Mammary epithelial cell (primary cell): ENCODE measurements at regions of chr2 and their contacts with region 1.

Region 1: GRCh38 chr2:237092920-237093781 is 7.5 kb downstream of the COPS8 start:
- DNase-seq: peak; percentile 48
- H3K4me3 ChIP-seq: no peak overlapping the region
- H3K27ac ChIP-seq: peak overlapping the region; percentile 24
- H3K4me1 ChIP-seq: peaks cover 50% of the 10 kb centered on the region
- H3K27me3 ChIP-seq: no peaks in the 10 kb centered on the region
- CTCF ChIP-seq: peak; percentile 68 to 73

Region 2: DNA sequence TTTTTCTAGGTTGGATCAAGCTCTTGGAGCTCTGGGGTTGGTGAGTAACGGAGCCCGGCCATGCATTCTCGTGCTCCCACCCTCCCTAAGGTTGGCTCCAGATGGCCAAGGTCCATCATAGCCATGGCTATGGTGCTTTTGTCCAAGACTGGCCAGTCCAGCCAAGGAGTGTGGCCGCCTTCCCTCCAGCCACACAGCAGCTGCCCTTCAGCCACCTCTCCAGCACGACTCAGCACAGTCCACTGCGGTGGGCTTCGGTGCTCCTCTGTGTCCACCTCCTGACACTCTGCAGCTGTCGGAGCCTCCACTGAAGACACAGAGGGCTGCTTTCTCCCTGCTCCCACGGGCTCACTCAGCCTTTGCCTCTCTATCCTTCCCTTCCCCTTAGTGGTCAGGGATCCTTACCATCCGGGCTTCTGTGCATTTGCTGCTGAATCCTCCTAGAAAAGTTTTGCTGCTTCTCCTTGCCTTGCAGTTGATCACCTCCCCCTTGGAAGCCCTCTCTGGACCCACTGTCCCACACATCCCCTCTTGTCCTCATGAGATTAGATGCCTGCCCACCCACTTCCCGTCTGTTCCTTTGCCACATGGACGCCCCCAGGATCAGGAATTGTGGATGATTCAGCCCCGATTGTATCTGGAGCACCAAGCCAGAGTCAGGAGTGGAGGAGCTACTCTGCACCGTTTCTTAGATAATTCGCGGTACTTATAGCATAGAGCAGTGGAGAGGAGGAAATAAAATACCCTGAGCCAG is 184.5 kb before region 1 on chr2:
- CTCF ChIA-PET with region 1: no interaction called
- dilution Hi-C with region 1: no loop called
- in situ Hi-C with region 1: no loop called
- intact Hi-C with region 1: no loop called
- DNase-seq: no peak
- H3K4me3 ChIP-seq: no peak overlapping the region
- H3K27ac ChIP-seq: no peak overlapping the region
- H3K4me1 ChIP-seq: no peaks in the 10 kb centered on the region
- H3K27me3 ChIP-seq: no peaks in the 10 kb centered on the region
- CTCF ChIP-seq: no peak

Region 3: DNA sequence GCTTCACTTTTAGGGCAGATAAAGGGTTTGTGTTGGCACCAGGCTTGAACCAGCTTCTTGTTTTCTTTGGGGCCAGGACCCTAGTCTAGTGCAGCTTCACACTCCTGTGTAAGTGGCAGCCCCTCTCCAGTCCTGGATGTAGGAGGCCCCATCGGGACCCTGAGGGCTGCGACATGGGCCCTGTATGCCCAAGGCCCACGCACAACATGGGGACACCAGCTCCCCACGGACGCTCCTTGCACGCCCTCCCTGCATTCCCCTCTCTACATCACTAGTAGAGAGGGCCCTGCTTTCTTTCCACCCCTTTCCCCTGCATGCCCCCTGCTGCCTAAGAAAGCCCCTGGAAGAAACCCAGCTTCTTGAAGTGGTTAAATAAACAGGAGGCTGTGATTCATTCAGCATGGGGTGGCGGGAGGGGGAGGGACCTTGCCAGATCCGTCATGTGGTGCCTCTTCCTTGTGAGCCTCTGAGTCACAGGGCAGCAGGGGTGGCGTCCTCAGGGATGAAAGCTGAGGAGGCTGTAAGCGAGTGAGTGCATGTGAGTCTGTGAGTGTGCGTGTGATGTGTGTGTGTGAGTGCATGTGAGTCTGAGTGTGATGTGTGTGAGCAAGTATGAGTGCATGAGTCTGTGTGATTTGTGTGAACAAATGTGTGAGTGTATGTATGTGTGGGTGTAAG is 35.0 kb after region 1 on chr2:
- CTCF ChIA-PET with region 1: no interaction called
- dilution Hi-C with region 1: no loop called
- in situ Hi-C with region 1: no loop called
- intact Hi-C with region 1: loop called (anchors 1 kb)
- DNase-seq: peak; percentile 97
- H3K4me3 ChIP-seq: no peak overlapping the region
- H3K27ac ChIP-seq: peak overlapping the region; percentile 10
- H3K4me1 ChIP-seq: peaks cover 13% of the 10 kb centered on the region
- H3K27me3 ChIP-seq: no peaks in the 10 kb centered on the region
- CTCF ChIP-seq: peak in 1 of 2 donors; percentile 16

Region 4: GRCh38 chr2:237165405-237166276 is 72.5 kb after region 1 on chr2:
- CTCF ChIA-PET with region 1: interaction called, 4 read pairs
- dilution Hi-C with region 1: no loop called
- in situ Hi-C with region 1: no loop called
- intact Hi-C with region 1: loop called (anchors 1 kb)
- DNase-seq: no peak
- H3K4me3 ChIP-seq: no peak overlapping the region
- H3K27ac ChIP-seq: no peak overlapping the region
- H3K4me1 ChIP-seq: no peaks in the 10 kb centered on the region
- H3K27me3 ChIP-seq: no peaks in the 10 kb centered on the region
- CTCF ChIP-seq: peak; percentile 68 to 77

Region 5: DNA sequence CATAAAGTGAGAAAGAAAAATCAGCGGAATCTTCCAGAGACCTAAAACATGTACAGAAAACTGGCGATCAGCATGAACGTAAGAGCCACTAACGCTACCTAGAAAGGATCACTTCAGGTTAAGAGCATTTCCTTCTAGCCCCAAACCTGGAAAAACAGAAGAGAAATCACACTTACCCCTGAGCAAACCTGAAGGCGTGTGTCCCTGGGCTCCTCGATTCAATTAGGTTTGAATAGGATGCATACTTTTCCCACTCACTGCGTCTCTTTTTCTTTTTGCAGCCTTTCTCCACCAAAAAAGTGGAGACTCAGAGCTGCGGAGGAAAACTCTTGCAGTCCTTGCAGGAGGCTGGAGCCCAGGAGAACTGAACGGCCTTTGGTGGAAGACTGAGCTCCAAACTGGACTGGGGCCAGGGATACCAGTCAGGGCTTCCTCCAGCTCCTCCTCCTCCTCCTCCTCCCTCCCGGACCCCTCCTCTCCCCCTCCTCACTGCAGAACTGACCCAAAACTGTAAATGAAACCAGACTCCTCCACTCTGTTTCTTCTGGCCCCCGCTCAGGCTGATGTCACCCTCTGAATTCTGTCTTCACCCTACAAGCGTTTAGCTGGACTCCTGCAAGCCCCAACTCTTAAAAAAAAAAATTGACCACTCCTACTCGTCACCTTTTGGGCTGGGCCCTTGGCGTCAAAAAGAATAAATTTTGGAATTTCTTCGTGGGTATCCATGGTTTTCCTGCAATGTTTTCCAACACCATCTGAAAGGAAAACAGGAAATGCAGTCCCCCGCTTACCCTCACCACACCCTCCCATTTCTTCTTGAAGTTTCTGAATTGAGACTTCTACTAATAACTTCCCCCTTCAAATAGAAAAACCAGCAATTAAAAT is 320.9 kb after region 1 on chr2 and contains the start of gene COL6A3:
- CTCF ChIA-PET with region 1: interaction called, 3 read pairs
- dilution Hi-C with region 1: no loop called
- in situ Hi-C with region 1: no loop called
- intact Hi-C with region 1: loop called (anchors 1 kb)
- DNase-seq: no peak
- H3K4me3 ChIP-seq: no peak within 1 kb of the TSS
- H3K27ac ChIP-seq: no peak within 1 kb of the TSS
- H3K4me1 ChIP-seq: no peaks in the 10 kb centered on the region
- H3K27me3 ChIP-seq: no peaks in the 10 kb centered on the region
- CTCF ChIP-seq: no peak
- total RNA-seq, gene COL6A3: 0.14 to 7.2 TPM

Region 6: DNA sequence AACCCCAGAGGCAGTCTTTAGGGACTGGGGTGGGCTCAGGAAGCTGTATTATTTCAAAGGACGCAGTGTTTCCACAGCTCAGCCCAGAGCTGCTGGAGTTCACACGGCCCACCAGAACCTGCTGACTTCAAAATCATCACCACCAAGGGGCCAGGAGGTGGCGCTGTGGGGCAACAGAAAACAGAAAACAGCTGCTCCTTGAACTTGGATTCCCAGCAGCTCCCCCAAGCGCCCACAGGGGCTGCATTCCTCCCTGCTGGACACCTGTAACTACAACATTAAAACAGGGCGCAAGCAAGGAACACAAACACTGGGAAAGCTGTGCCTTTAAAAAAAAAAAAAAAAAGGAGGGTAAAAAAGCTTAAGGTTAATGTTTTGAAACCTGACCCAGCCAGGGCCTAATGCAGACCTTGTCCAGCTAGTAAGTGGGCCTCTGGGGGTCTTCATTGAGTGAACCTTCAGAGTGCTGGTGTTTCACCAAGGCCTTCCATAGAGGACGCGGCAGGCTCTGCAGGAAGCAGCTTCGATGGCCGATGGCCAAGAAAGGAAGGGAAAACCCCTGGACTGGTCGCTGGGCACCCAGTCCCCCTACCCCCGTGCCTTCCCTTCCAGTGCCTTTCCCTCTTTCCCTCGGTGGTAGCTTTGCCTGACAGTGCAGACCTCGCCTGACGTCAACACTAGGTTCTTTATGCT is 419.8 kb after region 1 on chr2:
- CTCF ChIA-PET with region 1: interaction called, 3 read pairs
- dilution Hi-C with region 1: no loop called
- in situ Hi-C with region 1: no loop called
- intact Hi-C with region 1: loop called (anchors 1 kb)
- DNase-seq: peak; percentile 61
- H3K4me3 ChIP-seq: no peak overlapping the region
- H3K27ac ChIP-seq: no peak overlapping the region
- H3K4me1 ChIP-seq: no peaks in the 10 kb centered on the region
- H3K27me3 ChIP-seq: no peaks in the 10 kb centered on the region
- CTCF ChIP-seq: peak; percentile 71 to 91